ENCODE measurements at regions of chr17 and their contacts with region 1.

Region 1: DNA sequence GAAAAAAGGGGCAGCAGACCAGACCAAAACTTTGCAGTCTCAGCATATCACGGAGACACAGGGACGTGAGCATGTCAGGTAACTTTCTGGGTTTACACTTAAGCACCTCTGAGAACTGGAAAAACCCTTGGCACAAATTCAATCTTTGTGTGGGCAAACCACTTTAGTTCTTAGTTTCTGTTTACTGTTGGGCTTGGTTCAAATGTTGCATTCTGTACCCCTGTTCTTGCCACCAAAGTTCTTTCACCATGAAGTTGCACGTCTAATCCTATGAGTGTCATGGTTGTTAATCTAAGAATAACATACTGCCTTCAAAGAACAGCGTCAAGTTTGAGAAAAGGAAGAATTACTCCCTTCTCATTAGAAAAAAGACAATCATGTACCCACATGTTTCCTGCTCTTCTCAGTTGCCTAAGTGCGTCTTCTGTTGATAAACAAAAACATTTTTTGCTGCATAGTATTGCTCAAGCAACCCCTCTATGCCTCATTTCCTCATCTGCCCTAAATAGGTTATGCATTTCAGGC is 11.6 kb downstream of the KRT33A start:
- DNase-seq: peak in 8 of 10 donors; percentile 49 to 91 (median 74)
- ATAC-seq: peak; percentile 79 to 86
- H3K4me3 Mint-ChIP-seq: peak overlapping the region; percentile 8 to 77 (median 68)
- H3K27ac Mint-ChIP-seq: peak overlapping the region; percentile 92 to 100 (median 97)
- H3K4me1 Mint-ChIP-seq: peaks cover 43 to 93% (median 80%) of the 10 kb centered on the region in 4 donors
- H3K27me3 Mint-ChIP-seq: no peaks in the 10 kb centered on the region

Region 2: DNA sequence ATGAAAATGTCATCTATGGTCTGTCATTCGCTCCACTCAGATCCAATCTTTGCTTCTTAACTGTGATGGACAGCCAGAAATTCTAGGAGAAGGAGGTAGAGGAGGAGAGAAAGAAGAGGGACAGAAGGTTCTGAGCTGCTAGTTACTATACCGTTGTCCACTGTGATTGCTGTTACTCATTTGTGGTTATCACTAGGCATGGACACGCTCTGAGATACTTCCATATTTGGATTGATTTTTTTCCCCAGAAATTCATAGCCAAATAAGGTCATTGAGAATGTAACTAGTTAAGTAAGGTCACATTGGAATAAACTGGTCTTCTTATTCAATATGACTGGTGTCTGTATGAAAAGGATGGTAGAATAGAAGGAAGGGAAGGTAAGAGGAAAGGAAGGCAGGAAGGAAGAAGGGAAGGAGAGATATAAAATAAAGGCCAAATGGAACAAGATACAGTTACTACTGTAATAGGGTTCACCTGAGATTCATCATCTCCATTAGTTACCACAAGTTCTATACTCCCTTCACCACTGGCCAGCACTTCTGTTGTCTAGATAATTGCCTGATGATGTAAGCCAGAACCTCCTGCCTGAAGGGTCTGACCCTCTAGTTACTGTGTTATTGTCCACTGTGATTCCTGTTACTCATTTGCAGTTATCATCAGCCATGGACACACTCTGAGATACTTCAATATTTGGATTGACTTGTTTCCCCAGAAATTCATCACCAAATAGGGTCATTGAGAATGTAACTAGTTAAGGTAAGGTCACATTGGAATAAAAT is 60.7 kb before region 1 on chr17:
- POLR2A ChIA-PET with region 1: no interaction called
- DNase-seq: no peak
- ATAC-seq: no peak
- H3K4me3 Mint-ChIP-seq: no peak overlapping the region
- H3K27ac Mint-ChIP-seq: peak overlapping the region in 3 of 10 donors; percentile 8 to 54 (median 27)
- H3K4me1 Mint-ChIP-seq: peaks cover under 1 to 10% (median 3%) of the 10 kb centered on the region in 4 donors
- H3K27me3 Mint-ChIP-seq: peaks cover 0 to 14% (median 3%) of the 10 kb centered on the region in 5 donors

Region 3: DNA sequence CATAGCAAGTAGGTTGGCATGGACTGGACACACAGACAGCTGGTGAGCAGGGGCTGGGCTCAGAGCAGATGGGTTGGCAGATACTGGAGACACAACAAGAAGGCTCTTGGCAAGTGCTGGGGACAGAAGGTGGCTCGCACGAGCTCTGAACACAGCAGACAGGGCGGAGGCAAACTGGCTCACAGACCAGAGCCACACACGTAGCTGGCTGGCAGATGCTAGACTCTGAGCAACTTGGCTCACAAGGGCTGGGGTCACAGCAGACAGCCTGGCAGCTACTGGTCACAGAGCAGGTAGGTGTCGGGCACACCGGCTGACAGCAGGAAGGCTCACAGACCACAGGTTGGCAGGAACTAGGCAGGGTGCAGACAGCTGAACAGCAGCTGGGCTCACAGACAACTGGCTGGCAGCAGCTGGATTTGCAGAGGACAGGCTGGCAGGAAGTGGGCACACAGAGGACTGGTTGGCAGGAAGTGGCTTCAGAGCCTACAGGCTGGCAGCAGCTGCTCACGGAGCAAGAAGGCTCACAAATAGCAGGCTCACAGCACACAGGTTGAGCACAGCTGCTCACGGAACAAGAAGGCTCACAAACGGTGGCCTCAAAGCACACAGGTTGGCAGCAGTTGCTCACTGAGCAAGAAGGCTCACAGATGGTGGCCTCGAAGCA is 30.6 kb before region 1 on chr17:
- POLR2A ChIA-PET with region 1: interaction called, 26 read pairs
- DNase-seq: peak; percentile 56 to 95 (median 86)
- ATAC-seq: peak; percentile 85
- H3K4me3 Mint-ChIP-seq: peak overlapping the region; percentile 73 to 84 (median 80)
- H3K27ac Mint-ChIP-seq: peak overlapping the region; percentile 96 to 100 (median 99)
- H3K4me1 Mint-ChIP-seq: peaks cover 49 to 70% (median 68%) of the 10 kb centered on the region in 4 donors
- H3K27me3 Mint-ChIP-seq: no peaks in the 10 kb centered on the region

Region 4: GRCh38 chr17:41322094-41322902 is 16.7 kb before region 1 on chr17:
- POLR2A ChIA-PET with region 1: interaction called, 12 read pairs
- DNase-seq: peak in 5 of 10 donors; percentile 32 to 72 (median 65)
- ATAC-seq: peak; percentile 60 to 75
- H3K4me3 Mint-ChIP-seq: no peak overlapping the region
- H3K27ac Mint-ChIP-seq: peak overlapping the region in 9 of 10 donors; percentile 12 to 92 (median 83)
- H3K4me1 Mint-ChIP-seq: peaks cover 31 to 60% (median 53%) of the 10 kb centered on the region in 4 donors
- H3K27me3 Mint-ChIP-seq: no peaks in the 10 kb centered on the region

Region 5: DNA sequence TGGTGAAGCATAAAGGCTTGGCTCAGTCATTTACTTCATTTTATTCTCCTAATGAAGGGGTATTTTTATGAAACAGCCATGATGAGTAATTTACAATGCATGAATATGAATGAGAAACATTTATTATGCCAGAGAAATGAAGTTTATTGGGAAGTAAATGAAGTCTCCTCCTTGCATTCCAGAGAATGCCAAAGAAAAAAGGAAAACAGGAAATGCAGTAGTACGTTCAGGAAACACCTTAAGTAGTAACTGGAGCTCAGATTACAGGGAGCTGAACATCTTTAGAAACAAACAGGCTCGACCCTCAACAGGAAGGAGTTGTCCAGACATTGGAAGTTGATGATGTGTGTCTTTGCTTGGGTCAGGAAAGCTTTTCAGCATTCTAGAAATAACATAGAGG is 38.5 kb after region 1 on chr17:
- POLR2A ChIA-PET with region 1: no interaction called
- DNase-seq: no peak
- ATAC-seq: no peak
- H3K4me3 Mint-ChIP-seq: no peak overlapping the region
- H3K27ac Mint-ChIP-seq: peak overlapping the region in 2 of 10 donors; percentile 2 to 27
- H3K4me1 Mint-ChIP-seq: peaks cover 11 to 24% (median 20%) of the 10 kb centered on the region in 4 donors
- H3K27me3 Mint-ChIP-seq: peaks cover 0 to 7% (median 0%) of the 10 kb centered on the region in 5 donors

Measured in naive thymus-derived CD8-positive, alpha-beta T cell (primary cell).